ENCODE measurements at regions of chr3 and their contacts with region 1.

Region 1: GRCh38 chr3:141561426-141562034 is 74.7 kb downstream of the RASA2 start:
- DNase-seq: peak; percentile 75

Region 2: DNA sequence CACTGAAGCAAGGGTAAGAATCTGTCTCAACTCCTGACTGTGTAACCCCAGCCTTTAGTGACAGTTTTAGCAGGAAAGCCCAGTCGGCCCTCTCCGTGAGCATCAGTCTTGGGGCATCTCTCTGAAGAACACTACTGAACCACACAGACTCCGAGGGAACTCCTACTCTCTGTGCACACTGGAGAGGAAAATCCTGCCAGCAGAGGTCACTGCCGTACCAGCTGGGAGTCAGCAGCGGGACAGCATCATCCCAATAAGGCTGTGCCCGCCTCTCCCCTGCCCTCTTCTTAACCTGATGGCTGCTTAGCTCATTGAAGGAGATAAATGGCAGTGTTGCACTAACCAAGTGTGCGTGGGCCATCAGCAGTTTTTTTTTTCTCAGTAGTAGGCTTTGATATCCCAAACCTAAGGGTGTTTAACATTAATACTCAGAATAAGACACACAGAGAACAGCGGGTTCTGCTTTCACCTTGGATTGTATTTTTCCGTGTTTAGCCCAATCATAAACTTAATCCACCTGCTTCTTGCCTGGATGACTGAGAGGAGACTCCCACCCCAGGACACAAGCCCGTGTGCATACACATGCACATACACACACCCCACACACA is 101.3 kb before region 1 on chr3:
- in situ Hi-C with region 1: loop called (anchors 25 kb)
- DNase-seq: peak; percentile 86